GM12878 (cell line): ENCODE measurements at regions of chr6 and their contacts with region 1.

Region 1: DNA sequence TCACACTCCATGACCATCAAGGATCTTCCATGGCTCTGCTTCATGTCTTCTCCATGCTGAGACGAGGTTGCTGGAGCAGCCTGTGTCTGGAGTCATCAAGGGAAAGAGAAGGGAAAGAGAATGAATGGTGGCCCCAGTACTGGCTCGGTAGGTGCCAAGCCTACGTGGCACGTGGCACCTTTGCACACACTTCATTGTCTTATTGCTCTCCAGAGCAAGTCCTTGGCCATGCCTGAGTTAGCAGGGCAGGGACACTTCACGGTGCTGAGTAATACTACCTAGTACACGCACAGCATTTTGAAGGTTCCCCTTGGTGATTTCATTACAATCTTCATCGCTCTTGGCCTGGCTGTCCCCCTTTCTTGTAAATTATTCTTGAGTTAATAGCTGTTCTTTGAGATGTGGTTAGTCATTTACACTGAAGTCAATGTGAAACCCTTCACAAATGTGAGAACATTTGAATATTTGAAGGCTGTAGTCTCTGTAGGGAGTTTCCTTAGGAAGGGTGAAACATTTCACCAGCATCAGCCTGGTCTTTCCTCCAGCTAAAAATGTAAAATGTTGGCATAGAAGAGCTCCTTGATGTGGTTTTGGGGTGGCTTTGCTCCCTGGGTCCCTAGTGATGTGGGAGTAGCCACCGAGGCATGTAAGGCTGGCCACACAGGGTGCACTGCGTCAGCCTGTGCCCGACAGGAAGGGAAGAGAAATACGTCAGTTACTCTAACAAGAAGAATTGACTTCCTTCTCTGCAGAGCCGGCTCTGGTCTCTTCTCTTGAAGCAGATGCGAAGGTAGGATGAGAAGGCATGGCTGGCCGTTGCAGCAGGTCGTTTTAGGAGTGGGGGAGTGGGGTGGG is at the start of gene SYTL3:
- DNase-seq: peak; percentile 95
- ATAC-seq: peak; percentile 71
- H3K4me3 ChIP-seq: peak within 1 kb of the TSS; percentile 45; the same call in 1 of the 2 replicates
- H3K27ac ChIP-seq: peak within 1 kb of the TSS; percentile 76
- H3K4me1 ChIP-seq: peaks cover 43% of the 10 kb centered on the region
- H3K27me3 ChIP-seq: no peaks in the 10 kb centered on the region
- CTCF ChIP-seq: no peak
- EP300 ChIP-seq: peak; percentile 31 to 85; a peak in 3 of 4 replicates
- POLR2A ChIP-seq: peak; percentile 55
- RAD21 ChIP-seq: no peak
- polyA plus RNA-seq, gene SYTL3: 3.3 to 4.2 TPM

Region 2: GRCh38 chr6:158460602-158461169 is 188.8 kb before region 1 on chr6:
- CTCF ChIA-PET with region 1: no interaction called
- POLR2A ChIA-PET with region 1: no interaction called
- RAD21 ChIA-PET with region 1: no interaction called
- SMC1A ChIA-PET with region 1: no interaction called
- in situ Hi-C with region 1: no loop called
- intact Hi-C with region 1: no loop called
- DNase-seq: no peak
- ATAC-seq: no peak
- H3K4me3 ChIP-seq: no peak overlapping the region
- H3K27ac ChIP-seq: no peak overlapping the region
- H3K4me1 ChIP-seq: no peaks in the 10 kb centered on the region
- H3K27me3 ChIP-seq: no peaks in the 10 kb centered on the region
- CTCF ChIP-seq: no peak
- EP300 ChIP-seq: no peak
- POLR2A ChIP-seq: no peak
- RAD21 ChIP-seq: no peak

Region 3: GRCh38 chr6:158512809-158513208 is 136.7 kb before region 1 on chr6:
- CTCF ChIA-PET with region 1: no interaction called
- POLR2A ChIA-PET with region 1: no interaction called
- RAD21 ChIA-PET with region 1: no interaction called
- SMC1A ChIA-PET with region 1: no interaction called
- in situ Hi-C with region 1: no loop called
- intact Hi-C with region 1: no loop called
- DNase-seq: no peak
- ATAC-seq: no peak
- H3K4me3 ChIP-seq: no peak overlapping the region
- H3K27ac ChIP-seq: no peak overlapping the region
- H3K4me1 ChIP-seq: peaks cover 3% of the 10 kb centered on the region; the same call in 1 of the 2 replicates
- H3K27me3 ChIP-seq: no peaks in the 10 kb centered on the region
- CTCF ChIP-seq: no peak
- EP300 ChIP-seq: no peak
- POLR2A ChIP-seq: no peak
- RAD21 ChIP-seq: no peak

Region 4: DNA sequence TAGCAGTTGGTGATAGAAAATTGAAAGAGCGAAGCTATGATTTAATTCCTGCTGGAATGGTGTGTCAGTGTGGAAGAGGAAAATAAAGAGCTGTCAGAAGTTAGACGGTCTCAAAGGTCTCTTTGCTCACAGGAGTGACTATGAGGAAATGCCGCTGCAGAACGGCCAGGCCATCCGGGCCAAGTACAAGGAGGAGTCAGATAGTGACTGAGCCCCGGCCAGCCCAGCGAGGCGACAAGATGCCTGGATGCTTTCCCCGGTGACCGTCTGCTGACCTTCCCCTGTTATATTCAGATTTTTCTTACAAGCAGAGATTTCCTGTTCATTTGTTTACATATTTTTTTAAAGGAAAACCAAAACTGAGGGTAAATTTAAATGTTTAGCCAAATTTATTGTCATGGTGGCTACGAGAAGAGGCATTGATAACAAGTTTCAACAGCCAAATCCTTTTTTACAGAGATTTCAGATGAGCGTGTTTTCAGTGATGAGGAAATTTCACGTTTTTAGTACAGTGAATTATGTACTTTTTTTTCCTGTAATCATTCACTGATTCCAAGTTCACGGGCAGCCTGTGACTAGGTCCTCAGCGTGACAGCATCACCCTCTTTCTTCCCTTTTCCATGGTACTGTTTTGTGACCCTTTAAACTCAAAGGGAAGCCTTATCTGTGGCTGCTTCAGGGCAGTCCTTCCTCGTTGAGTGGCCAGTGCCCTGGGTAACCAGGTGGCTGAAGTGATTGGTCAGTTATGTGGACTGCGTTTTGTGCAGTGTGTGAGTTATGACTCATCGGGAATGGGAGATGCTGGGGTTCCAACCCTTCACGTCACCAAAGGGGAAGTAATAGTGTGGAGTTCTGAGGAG is 17.6 kb before region 1 on chr6:
- CTCF ChIA-PET with region 1: interaction called, 3 read pairs
- POLR2A ChIA-PET with region 1: no interaction called
- RAD21 ChIA-PET with region 1: interaction called, 3 read pairs
- SMC1A ChIA-PET with region 1: interaction called, 12 read pairs
- in situ Hi-C with region 1: no loop called
- intact Hi-C with region 1: no loop called
- DNase-seq: no peak
- ATAC-seq: no peak
- H3K4me3 ChIP-seq: no peak overlapping the region
- H3K27ac ChIP-seq: no peak overlapping the region
- H3K4me1 ChIP-seq: no peaks in the 10 kb centered on the region
- H3K27me3 ChIP-seq: no peaks in the 10 kb centered on the region
- CTCF ChIP-seq: no peak
- EP300 ChIP-seq: no peak
- POLR2A ChIP-seq: no peak
- RAD21 ChIP-seq: no peak

Region 5: DNA sequence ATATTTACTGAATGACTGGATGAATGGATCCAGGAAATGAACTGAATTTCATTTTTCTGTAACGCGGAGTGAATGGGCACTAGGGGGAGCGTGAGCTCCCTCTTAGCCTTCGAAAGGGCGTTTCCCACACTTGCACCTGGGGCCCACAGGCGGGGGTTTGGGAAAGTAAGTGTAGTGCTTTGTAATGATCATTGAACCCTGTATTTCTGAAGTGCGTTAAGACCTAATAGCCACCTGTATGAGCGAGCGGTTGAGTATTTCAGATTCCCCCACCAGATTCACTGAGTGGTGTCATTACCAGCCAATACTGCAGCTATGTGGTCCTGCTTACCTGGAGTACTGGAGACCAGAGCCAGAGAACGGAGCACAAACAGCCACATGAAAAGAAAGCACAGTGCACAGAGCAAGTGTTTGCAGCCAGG is 10.8 kb after region 1 on chr6:
- CTCF ChIA-PET with region 1: interaction called, 34 read pairs
- POLR2A ChIA-PET with region 1: interaction called, 5 read pairs
- RAD21 ChIA-PET with region 1: interaction called, 19 read pairs
- SMC1A ChIA-PET with region 1: interaction called, 41 read pairs
- in situ Hi-C with region 1: no loop called
- intact Hi-C with region 1: no loop called
- DNase-seq: no peak
- ATAC-seq: peak; percentile 76
- H3K4me3 ChIP-seq: no peak overlapping the region
- H3K27ac ChIP-seq: no peak overlapping the region
- H3K4me1 ChIP-seq: peaks cover 9% of the 10 kb centered on the region
- H3K27me3 ChIP-seq: no peaks in the 10 kb centered on the region
- CTCF ChIP-seq: peak; percentile 57 to 70 (median 62)
- EP300 ChIP-seq: no peak
- POLR2A ChIP-seq: no peak
- RAD21 ChIP-seq: peak; percentile 59

Region 6: GRCh38 chr6:158666628-158667359 is 17.3 kb after region 1 on chr6:
- CTCF ChIA-PET with region 1: interaction called, 5 read pairs
- POLR2A ChIA-PET with region 1: interaction called, 13 read pairs
- RAD21 ChIA-PET with region 1: interaction called, 9 read pairs
- SMC1A ChIA-PET with region 1: interaction called, 41 read pairs
- in situ Hi-C with region 1: no loop called
- intact Hi-C with region 1: no loop called
- DNase-seq: no peak
- ATAC-seq: peak; percentile 77
- H3K4me3 ChIP-seq: no peak overlapping the region
- H3K27ac ChIP-seq: no peak overlapping the region
- H3K4me1 ChIP-seq: peaks cover 11% of the 10 kb centered on the region; the same call in 1 of the 2 replicates
- H3K27me3 ChIP-seq: no peaks in the 10 kb centered on the region
- CTCF ChIP-seq: no peak
- EP300 ChIP-seq: no peak
- POLR2A ChIP-seq: no peak
- RAD21 ChIP-seq: no peak

Region 7: GRCh38 chr6:159116343-159116742 is 466.8 kb after region 1 on chr6:
- CTCF ChIA-PET with region 1: no interaction called
- POLR2A ChIA-PET with region 1: no interaction called
- RAD21 ChIA-PET with region 1: interaction called, 3 read pairs
- SMC1A ChIA-PET with region 1: interaction called, 3 read pairs
- in situ Hi-C with region 1: no loop called
- intact Hi-C with region 1: loop called (anchors 5 kb)
- DNase-seq: no peak
- ATAC-seq: peak; percentile 82
- H3K4me3 ChIP-seq: no peak overlapping the region
- H3K27ac ChIP-seq: no peak overlapping the region
- H3K4me1 ChIP-seq: peaks cover 31% of the 10 kb centered on the region
- H3K27me3 ChIP-seq: peaks cover 0 to 3% of the 10 kb centered on the region in 2 experiments; a peak in 1 of 4 replicates
- CTCF ChIP-seq: no peak
- EP300 ChIP-seq: peak in 1 of 2 experiments; percentile 47; a peak in 2 of 4 replicates
- POLR2A ChIP-seq: no peak
- RAD21 ChIP-seq: no peak